ENCODE measurements at regions of chr19 and their contacts with region 1.

Region 1: GRCh38 chr19:506404-507285 is 652 bp upstream of the TPGS1 start:
- DNase-seq: peak; percentile 91
- ATAC-seq: peak; percentile 66
- H3K4me3 Mint-ChIP-seq: peak overlapping the region; percentile 96
- H3K27ac Mint-ChIP-seq: peak overlapping the region; percentile 99
- H3K4me1 Mint-ChIP-seq: peaks cover 28% of the 10 kb centered on the region
- H3K27me3 Mint-ChIP-seq: no peaks in the 10 kb centered on the region

Region 2: DNA sequence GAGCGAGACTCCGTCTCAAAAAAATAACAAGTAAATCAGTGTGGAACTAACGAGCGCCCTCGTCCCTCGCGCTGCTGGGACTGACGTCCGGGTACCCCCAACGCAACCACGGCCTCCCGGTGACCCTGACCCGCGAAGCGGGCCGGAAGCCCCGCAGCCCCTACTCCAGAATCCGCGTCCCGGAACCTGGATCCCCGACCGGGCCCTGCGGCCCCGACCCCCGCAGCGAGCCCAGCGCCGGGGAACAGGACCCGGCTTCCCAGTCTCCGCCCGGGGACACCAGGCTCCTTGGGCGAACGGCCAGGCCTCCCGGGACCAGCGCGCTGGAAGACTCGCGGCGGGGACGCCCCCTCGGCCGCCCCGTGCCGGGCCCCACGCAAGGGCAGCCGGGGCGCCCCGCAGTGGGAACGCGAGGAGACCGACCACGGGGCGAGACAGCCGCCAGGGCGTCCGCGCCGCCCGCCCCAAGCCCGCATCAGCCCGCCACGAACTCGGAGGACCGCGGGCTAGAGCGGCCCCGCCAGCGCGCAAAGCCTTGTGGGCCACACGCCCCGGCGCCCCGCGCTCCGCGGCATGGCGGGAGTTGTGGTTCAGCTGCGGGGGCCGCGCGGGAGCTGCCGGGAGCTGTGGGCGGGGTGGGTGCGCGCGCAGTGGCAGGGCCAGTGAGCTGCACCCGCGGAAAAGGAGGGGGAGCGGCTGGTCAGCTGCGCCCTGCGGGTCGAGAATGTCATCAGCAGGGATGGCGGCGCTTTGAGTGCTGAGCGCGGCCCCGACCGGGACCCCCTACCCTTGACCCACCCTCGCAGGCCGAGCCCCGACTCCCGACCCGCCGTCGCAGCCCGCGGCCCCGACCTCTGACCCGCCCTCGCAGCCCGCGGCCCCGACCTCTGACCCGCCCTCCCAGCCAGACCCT is 17.9 kb before region 1 on chr19:
- POLR2A ChIA-PET with region 1: interaction called, 32 read pairs
- DNase-seq: peak; percentile 98
- ATAC-seq: peak; percentile 87
- H3K4me3 Mint-ChIP-seq: peak overlapping the region; percentile 81
- H3K27ac Mint-ChIP-seq: peak overlapping the region; percentile 74
- H3K4me1 Mint-ChIP-seq: peaks cover 5% of the 10 kb centered on the region
- H3K27me3 Mint-ChIP-seq: peaks cover 2% of the 10 kb centered on the region

Region 3: GRCh38 chr19:519449-519865 is 12.8 kb after region 1 on chr19:
- POLR2A ChIA-PET with region 1: interaction called, 10 read pairs
- DNase-seq: no peak
- ATAC-seq: no peak
- H3K4me3 Mint-ChIP-seq: no peak overlapping the region
- H3K27ac Mint-ChIP-seq: no peak overlapping the region
- H3K4me1 Mint-ChIP-seq: peaks cover 3% of the 10 kb centered on the region
- H3K27me3 Mint-ChIP-seq: no peaks in the 10 kb centered on the region

Region 4: GRCh38 chr19:572140-572742 is 65.6 kb after region 1 on chr19 and contains the start of gene BSG:
- POLR2A ChIA-PET with region 1: interaction called, 11 read pairs
- DNase-seq: peak; percentile 99
- ATAC-seq: peak; percentile 83
- H3K4me3 Mint-ChIP-seq: peak within 1 kb of the TSS; percentile 97
- H3K27ac Mint-ChIP-seq: peak within 1 kb of the TSS; percentile 97
- H3K4me1 Mint-ChIP-seq: peaks cover 26% of the 10 kb centered on the region
- H3K27me3 Mint-ChIP-seq: no peaks in the 10 kb centered on the region
- total RNA-seq, gene BSG: 183 to 196 TPM

Measured in activated naive CD8-positive, alpha-beta T cell treated with anti-CD3 and anti-CD28 coated beads, Interleukin-2, amount 10 ng/mL, durations not matched to agents 7 days and 5 days (primary cell).